PC-9 (cell line): ENCODE measurements at regions of chr1 and their contacts with region 1.

Region 1: GRCh38 chr1:1063945-1064831 is 9.9 kb downstream of the RNF223 start:
- DNase-seq: peak; percentile 83 to 85
- H3K4me3 ChIP-seq: peak overlapping the region; percentile 47; the same call in 1 of the 2 replicates
- H3K27ac ChIP-seq: peak overlapping the region; percentile 68
- H3K4me1 ChIP-seq: peaks cover 29% of the 10 kb centered on the region
- H3K27me3 ChIP-seq: no peaks in the 10 kb centered on the region
- CTCF ChIP-seq: peak; percentile 89

Region 2: DNA sequence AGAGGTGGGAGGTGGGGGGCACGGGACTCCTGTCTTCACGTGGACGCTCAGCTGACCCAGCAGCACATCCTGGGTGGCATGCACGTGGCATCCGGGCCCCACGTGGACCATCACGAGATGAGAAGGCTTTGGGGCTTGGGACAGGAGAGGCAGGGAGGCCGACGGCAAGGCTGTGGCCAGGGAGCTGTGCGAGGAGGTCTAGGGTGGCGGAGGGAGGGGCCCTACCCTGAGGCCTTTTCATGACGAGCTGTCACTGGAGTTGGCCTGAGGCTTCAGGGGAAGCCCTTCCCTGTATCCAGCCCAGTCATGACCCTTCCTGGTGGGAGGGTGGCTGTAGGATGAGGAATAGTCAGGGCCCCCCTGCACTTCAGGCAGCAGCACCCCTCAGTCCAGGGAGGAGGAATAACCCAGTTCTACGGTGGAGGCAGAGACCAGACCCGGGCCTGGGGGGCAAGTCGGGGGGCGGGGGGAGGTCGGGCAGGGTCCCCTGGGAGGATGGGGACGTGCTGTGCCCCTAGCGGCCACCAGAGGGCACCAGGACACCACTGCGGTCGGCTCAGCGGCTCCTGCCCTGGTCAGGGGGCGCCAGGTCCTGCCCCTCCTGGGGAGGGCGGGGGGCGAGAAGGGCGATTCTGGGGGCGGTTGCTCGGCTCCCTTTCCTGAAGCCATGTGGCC is 80.3 kb before region 1 on chr1:
- CTCF ChIA-PET with region 1: no interaction called
- POLR2A ChIA-PET with region 1: no interaction called
- intact Hi-C with region 1: loop called (anchors 1 kb)
- DNase-seq: peak in 1 of 2 experiments; percentile 55
- H3K4me3 ChIP-seq: no peak overlapping the region
- H3K27ac ChIP-seq: no peak overlapping the region
- H3K4me1 ChIP-seq: no peaks in the 10 kb centered on the region
- H3K27me3 ChIP-seq: no peaks in the 10 kb centered on the region
- CTCF ChIP-seq: peak; percentile 92

Region 3: GRCh38 chr1:1006305-1007159 is 57.7 kb before region 1 on chr1:
- CTCF ChIA-PET with region 1: no interaction called
- POLR2A ChIA-PET with region 1: interaction called, 12 read pairs
- intact Hi-C with region 1: no loop called
- DNase-seq: peak; percentile 67 to 80
- H3K4me3 ChIP-seq: peak overlapping the region; percentile 23; the same call in 1 of the 2 replicates
- H3K27ac ChIP-seq: peak overlapping the region; percentile 48
- H3K4me1 ChIP-seq: peaks cover 15% of the 10 kb centered on the region
- H3K27me3 ChIP-seq: no peaks in the 10 kb centered on the region
- CTCF ChIP-seq: no peak

Region 4: DNA sequence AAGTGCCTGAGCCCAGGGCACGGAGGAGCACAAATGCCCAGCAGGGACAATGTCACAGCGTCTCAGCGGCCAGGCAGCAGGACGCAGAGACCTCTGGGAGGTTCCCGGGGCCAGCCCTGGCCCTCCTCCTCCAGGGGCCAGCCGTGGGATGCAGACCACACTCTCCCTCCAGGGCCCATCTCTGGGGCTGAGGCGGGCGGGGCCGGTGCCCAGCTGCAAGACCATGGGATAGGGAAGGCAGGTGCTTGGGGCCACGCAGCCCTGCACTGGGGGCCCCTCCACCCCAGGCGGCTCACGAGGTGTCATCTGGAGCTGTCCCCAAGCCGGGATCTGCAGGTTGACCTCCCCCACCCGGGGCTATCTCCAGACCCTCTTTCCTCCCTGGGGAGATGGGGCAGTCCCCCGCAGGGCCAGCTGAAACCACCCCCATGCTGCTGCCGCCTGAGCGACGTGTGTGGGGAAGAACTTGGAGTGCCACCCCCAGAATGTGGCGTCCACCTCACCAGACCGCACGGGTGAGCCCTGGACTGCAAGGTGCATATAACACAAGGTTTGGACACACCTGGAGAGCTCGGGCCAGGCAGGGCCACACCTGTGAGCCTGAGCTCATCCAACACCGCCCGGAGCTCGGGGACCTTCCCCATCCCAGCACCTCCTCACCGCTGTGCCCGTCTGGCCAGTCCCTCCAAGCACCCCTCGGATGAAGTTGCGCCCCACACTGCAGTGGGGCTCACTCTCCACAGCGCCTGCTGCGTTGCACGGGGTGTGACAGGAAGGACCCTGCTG is 105.4 kb after region 1 on chr1:
- CTCF ChIA-PET with region 1: no interaction called
- POLR2A ChIA-PET with region 1: no interaction called
- intact Hi-C with region 1: no loop called
- DNase-seq: no peak
- H3K4me3 ChIP-seq: no peak overlapping the region
- H3K27ac ChIP-seq: no peak overlapping the region
- H3K4me1 ChIP-seq: peaks cover 14% of the 10 kb centered on the region
- H3K27me3 ChIP-seq: no peaks in the 10 kb centered on the region
- CTCF ChIP-seq: no peak

Region 5: GRCh38 chr1:1471389-1472052 is 407.3 kb after region 1 on chr1 and contains the start of gene ATAD3B:
- CTCF ChIA-PET with region 1: no interaction called
- POLR2A ChIA-PET with region 1: no interaction called
- intact Hi-C with region 1: no loop called
- DNase-seq: peak; percentile 79 to 88
- H3K4me3 ChIP-seq: peak within 1 kb of the TSS; percentile 90
- H3K27ac ChIP-seq: peak within 1 kb of the TSS; percentile 68
- H3K4me1 ChIP-seq: peaks cover 13% of the 10 kb centered on the region; the same call in 1 of the 2 replicates
- H3K27me3 ChIP-seq: no peaks in the 10 kb centered on the region
- CTCF ChIP-seq: no peak
- total RNA-seq, gene ATAD3B: 28.5 and 32.8 TPM in 2 replicates

Region 6: DNA sequence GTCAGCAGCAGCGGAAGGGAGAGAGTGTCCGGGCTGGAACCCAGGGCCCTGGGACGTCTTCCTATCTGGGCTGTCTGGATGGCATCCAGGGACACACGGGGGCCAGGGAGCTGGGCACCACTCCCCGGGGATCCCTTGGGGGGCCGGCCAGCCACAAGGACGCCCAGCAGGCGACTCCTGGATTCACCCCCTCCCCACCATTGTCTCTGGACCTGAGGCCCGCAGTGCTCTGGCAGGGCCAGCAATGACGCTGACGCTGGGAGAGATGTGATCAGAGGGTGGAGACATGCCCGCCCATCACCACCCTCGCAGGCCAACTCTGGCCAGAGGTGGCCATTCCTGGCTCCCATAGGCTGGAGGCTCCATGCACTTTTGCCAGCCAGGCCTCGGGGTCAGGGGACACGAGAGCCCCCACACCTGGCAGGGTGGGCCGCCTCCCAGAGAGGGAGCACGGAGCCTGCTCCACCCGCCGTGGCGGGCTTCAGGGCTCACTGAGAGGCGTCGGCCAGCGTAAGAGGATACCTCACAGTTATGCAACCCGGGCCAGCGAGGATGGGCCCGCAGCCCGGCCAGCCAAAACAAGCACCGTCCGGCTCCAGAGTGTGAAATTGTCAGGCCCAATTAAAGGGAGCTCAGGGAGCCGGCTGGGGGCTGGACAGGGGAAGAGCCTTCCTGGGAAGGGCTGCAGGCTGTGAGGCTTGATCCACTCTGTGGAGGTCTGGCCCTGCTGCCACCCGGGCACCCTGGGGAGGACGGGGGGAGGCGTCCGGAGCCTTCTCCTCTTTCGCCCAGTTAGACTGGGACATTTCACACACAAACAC is 1967.4 kb after region 1 on chr1:
- CTCF ChIA-PET with region 1: no interaction called
- POLR2A ChIA-PET with region 1: no interaction called
- intact Hi-C with region 1: no loop called
- DNase-seq: no peak
- H3K4me3 ChIP-seq: no peak overlapping the region
- H3K27ac ChIP-seq: no peak overlapping the region
- H3K4me1 ChIP-seq: no peaks in the 10 kb centered on the region
- H3K27me3 ChIP-seq: peaks cover 94% of the 10 kb centered on the region
- CTCF ChIP-seq: no peak